Ascending aorta (tissue), 2 donors: ENCODE measurements at regions of chr1 and their contacts with region 1.

Region 1: GRCh38 chr1:205211169-205211838 is at the start of gene DSTYK:
- DNase-seq: peak; percentile 79 to 97
- H3K4me3 ChIP-seq: peak within 1 kb of the TSS; percentile 94 to 98
- H3K27ac ChIP-seq: peak within 1 kb of the TSS; percentile 92
- H3K4me1 ChIP-seq: peaks cover 6 to 8% of the 10 kb centered on the region in 2 donors
- H3K27me3 ChIP-seq: no peaks in the 10 kb centered on the region
- CTCF ChIP-seq: no peak
- total RNA-seq, gene DSTYK: 8.1 TPM

Region 2: GRCh38 chr1:205121660-205122488 is 89.4 kb before region 1 on chr1 and contains the start of gene RBBP5:
- intact Hi-C with region 1: loop called (anchors 1 kb)
- DNase-seq: peak; percentile 84 to 97
- H3K4me3 ChIP-seq: peak within 1 kb of the TSS; percentile 73 to 90
- H3K27ac ChIP-seq: peak within 1 kb of the TSS; percentile 87 to 92
- H3K4me1 ChIP-seq: peaks cover 18% of the 10 kb centered on the region in 2 donors
- H3K27me3 ChIP-seq: no peaks in the 10 kb centered on the region
- CTCF ChIP-seq: peak; percentile 58 to 74 (median 64)
- total RNA-seq, gene RBBP5: 7.2 TPM

Region 3: GRCh38 chr1:205172729-205173366 is 38.5 kb before region 1 on chr1:
- intact Hi-C with region 1: loop called (anchors 2 kb)
- DNase-seq: no peak
- H3K4me3 ChIP-seq: no peak overlapping the region
- H3K27ac ChIP-seq: no peak overlapping the region
- H3K4me1 ChIP-seq: peaks cover 0 to 2% of the 10 kb centered on the region in 2 donors
- H3K27me3 ChIP-seq: no peaks in the 10 kb centered on the region
- CTCF ChIP-seq: no peak

Region 4: GRCh38 chr1:205227584-205228006 is 16.3 kb after region 1 on chr1 and contains the start of gene TMCC2:
- intact Hi-C with region 1: loop called (anchors 1 kb)
- DNase-seq: peak; percentile 39 to 92
- H3K4me3 ChIP-seq: peak within 1 kb of the TSS; percentile 40 to 86
- H3K27ac ChIP-seq: peak within 1 kb of the TSS in 1 of 2 donors; percentile 65
- H3K4me1 ChIP-seq: peaks cover 0 to 20% of the 10 kb centered on the region in 2 donors
- H3K27me3 ChIP-seq: no peaks in the 10 kb centered on the region
- CTCF ChIP-seq: no peak
- total RNA-seq, gene TMCC2: 5.2 TPM